ENCODE measurements at regions of chr10 and their contacts with region 1.

Region 1: DNA sequence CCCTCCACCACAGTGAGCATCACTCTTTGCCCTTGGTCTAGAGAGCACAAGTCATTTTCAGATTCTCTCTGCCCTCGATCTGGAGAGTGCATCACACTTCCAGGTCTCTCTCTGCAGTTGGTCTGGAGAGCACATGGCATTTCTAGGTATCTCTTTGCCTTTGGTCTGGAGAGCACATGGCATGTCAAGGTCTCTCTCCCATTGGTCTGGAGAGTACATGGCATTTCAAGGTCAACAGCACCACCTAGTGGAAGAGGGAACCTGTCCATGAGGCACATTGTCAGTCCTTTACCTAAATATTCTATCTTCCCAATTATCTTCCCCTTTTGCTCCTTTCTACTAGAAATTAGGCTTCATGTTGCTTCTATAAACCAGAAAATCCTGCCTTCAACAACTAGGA is 1139.4 kb downstream of the XPNPEP1 start:
- DNase-seq: peak; percentile 31
- ATAC-seq: peak; percentile 86
- H3K4me3 ChIP-seq: no peak overlapping the region
- H3K27ac ChIP-seq: no peak overlapping the region
- H3K4me1 ChIP-seq: no peaks in the 10 kb centered on the region
- H3K27me3 ChIP-seq: no peaks in the 10 kb centered on the region
- CTCF ChIP-seq: peak; percentile 59 to 67 (median 66)
- EP300 ChIP-seq: no peak
- POLR2A ChIP-seq: no peak
- RAD21 ChIP-seq: peak; percentile 83

Region 2: DNA sequence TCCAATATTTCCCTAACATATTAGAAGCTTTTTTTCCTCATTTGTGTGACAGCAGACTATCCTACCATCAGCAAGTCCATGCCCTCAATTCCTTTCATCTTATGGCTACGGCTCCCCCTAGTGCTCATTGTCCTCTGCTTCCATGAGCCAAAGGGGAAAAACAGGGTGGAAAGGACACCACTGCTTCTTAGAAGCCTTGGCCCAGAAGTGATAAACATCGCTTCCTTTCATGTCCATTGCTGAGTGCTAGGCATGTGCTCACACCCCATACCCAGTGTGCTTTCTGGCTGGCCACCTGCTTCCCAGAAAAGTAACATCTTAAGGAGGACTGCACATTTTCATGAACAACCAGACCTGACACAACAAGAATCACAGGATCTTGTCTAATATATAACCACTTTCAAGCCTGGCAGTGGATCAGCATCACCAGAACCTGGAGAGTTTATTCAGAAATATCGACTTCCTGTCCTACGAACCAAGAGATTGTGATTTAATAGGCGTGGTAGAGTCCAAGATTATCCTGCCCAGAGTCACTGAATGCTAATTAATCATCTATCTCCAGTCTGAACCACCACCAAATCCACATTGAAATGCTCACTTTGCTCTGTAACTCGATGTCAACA is 968.9 kb before region 1 on chr10:
- CTCF ChIA-PET with region 1: no interaction called
- POLR2A ChIA-PET with region 1: no interaction called
- RAD21 ChIA-PET with region 1: no interaction called
- SMC1A ChIA-PET with region 1: no interaction called
- in situ Hi-C with region 1: no loop called
- intact Hi-C with region 1: loop called (anchors 10 kb)
- DNase-seq: peak; percentile 20
- ATAC-seq: peak; percentile 95
- H3K4me3 ChIP-seq: no peak overlapping the region
- H3K27ac ChIP-seq: no peak overlapping the region
- H3K4me1 ChIP-seq: no peaks in the 10 kb centered on the region
- H3K27me3 ChIP-seq: no peaks in the 10 kb centered on the region
- CTCF ChIP-seq: peak; percentile 59 to 81 (median 74)
- EP300 ChIP-seq: no peak
- POLR2A ChIP-seq: no peak
- RAD21 ChIP-seq: peak; percentile 87

Region 3: GRCh38 chr10:108358912-108359311 is 425.0 kb before region 1 on chr10:
- CTCF ChIA-PET with region 1: no interaction called
- POLR2A ChIA-PET with region 1: no interaction called
- RAD21 ChIA-PET with region 1: no interaction called
- SMC1A ChIA-PET with region 1: no interaction called
- in situ Hi-C with region 1: no loop called
- intact Hi-C with region 1: loop called (anchors 10 kb)
- DNase-seq: peak; percentile 13
- ATAC-seq: peak; percentile 86
- H3K4me3 ChIP-seq: no peak overlapping the region
- H3K27ac ChIP-seq: no peak overlapping the region
- H3K4me1 ChIP-seq: no peaks in the 10 kb centered on the region
- H3K27me3 ChIP-seq: no peaks in the 10 kb centered on the region
- CTCF ChIP-seq: peak in 1 of 3 experiments; percentile 8; a peak in 1 of 6 replicates
- EP300 ChIP-seq: peak; percentile 32 to 38; a peak in 1 of 4 replicates
- POLR2A ChIP-seq: no peak
- RAD21 ChIP-seq: peak; percentile 1; the same call in 1 of the 2 replicates

Region 4: DNA sequence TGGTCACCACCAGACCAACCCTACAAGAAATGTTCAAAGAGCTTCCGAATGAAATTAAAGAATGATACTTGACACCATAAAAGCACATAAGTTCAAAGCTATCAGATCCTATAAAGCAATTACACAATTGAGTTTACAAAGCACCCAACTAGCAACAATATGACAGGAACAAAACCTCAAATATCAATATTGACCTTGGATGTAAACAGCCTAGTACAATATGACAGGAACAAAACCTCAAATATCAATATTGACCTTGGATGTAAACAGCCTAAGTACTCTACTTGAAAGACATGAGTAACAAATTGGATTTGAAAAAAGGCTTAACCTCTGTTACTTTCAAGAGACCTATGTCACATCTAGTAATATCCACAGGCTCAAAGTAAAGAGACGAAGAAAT is 62.0 kb before region 1 on chr10:
- CTCF ChIA-PET with region 1: no interaction called
- POLR2A ChIA-PET with region 1: no interaction called
- RAD21 ChIA-PET with region 1: no interaction called
- SMC1A ChIA-PET with region 1: no interaction called
- in situ Hi-C with region 1: no loop called
- intact Hi-C with region 1: no loop called
- DNase-seq: no peak
- ATAC-seq: no peak
- H3K4me3 ChIP-seq: no peak overlapping the region
- H3K27ac ChIP-seq: no peak overlapping the region
- H3K4me1 ChIP-seq: no peaks in the 10 kb centered on the region
- H3K27me3 ChIP-seq: no peaks in the 10 kb centered on the region
- CTCF ChIP-seq: no peak
- EP300 ChIP-seq: no peak
- POLR2A ChIP-seq: no peak
- RAD21 ChIP-seq: no peak

Measured in GM12878 (cell line).